ENCODE measurements at regions of chr7 and their contacts with region 1.

Region 1: DNA sequence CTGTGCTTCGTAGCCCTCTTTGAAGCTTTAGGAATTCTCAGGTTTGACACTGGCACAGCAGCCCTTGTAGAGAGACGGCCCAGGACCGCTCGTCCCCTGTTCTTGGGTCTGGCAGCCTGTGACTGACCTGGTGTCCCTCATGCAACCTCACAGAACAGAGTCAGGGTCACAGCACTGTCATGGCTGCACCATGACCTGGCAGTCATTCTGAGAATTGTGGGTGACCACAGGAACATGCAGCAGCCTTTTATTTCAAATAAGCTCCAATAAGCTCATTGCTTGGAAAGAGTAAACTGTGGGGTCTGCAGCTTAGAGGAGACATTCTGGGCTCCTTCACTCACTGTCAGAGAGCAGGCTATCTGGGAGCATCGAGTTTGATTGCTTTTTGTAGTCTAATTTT is 42.5 kb downstream of the MYO1G start:
- DNase-seq: no peak
- ATAC-seq: no peak

Region 2: GRCh38 chr7:44533303-44534055 is 402.8 kb before region 1 on chr7:
- intact Hi-C with region 1: no loop called
- DNase-seq: no peak
- ATAC-seq: no peak

Region 3: DNA sequence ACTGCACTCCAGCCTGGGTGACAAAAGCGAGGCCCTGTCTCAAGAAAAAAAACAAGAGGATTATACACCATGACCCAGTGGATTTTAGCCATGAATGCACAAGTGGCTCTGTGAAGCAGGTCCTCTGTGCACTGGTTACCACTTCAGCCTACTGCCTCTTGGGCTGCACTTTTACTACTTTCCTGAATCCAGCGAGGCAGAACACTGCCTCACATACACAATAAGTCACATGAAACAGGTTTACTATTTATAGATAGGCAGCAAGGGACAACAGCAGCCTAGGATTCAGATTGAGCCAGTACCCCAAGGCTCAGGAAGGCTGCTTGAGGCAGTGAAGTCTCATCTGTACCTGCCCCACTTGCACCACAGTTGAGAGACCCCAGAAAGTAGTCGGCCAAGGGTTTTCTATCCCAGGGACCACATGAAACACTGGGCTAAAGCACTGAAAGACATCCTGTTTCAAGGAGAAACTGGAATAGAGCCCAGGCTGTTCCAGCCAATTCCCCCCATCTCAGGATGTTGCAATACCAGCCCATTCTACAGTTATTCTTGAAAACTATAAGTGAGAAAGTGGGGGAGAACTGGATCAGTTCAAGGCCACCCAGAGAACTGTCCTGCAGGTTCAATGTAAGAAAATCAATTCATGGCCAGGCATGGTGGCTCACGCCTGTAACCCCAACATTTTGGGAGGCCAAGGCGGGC is 340.2 kb before region 1 on chr7:
- intact Hi-C with region 1: loop called in 1 of 2 experiments (anchors 10 kb)
- DNase-seq: peak in 1 of 2 donors; percentile 0
- ATAC-seq: no peak

Region 4: GRCh38 chr7:44650772-44651171 is 285.6 kb before region 1 on chr7:
- intact Hi-C with region 1: no loop called
- DNase-seq: no peak
- ATAC-seq: peak; percentile 23

Measured in left colon (tissue), 2 donors.